Panc1 (cell line): ENCODE measurements at regions of chr16 and their contacts with region 1.

Region 1: DNA sequence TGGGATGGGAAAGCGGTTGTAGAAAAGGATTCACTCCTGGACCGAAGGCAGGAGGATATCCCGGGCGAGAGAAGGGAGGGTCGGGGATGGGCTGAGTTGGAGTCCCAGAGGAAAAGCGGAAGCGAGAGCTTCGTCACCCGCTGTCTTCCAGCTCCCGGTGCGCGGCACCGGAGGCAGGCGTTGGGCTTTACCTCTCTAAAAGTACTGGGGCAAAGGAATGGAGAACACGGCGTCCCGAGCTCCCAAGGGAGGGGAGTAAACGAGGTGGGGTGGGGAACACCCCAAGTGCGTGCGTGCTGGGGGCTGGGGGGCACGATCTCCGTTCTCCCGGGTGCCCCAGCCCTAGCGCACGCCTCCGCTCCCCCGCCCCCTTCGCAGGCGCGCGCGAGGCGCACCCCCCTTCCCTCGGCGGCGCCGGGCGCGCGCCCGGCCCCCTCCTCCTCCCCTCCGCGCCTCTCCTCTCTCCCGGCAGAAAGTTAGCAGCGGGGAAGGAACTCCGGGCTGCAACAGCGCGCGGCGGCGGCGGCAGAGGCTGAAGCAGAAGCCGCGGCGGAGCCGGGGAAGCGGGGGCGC is at the start of gene HS3ST4:
- DNase-seq: no peak
- ATAC-seq: no peak
- H3K4me3 ChIP-seq: no peak within 1 kb of the TSS
- H3K27ac ChIP-seq: no peak within 1 kb of the TSS
- H3K4me1 ChIP-seq: 0 out of 2 replicates have a peak, but pooled peaks cover 2% of the 10 kb centered on the region
- H3K27me3 ChIP-seq: peaks cover 32% of the 10 kb centered on the region
- CTCF ChIP-seq: no peak
- total RNA-seq, gene HS3ST4: not detected

Region 2: DNA sequence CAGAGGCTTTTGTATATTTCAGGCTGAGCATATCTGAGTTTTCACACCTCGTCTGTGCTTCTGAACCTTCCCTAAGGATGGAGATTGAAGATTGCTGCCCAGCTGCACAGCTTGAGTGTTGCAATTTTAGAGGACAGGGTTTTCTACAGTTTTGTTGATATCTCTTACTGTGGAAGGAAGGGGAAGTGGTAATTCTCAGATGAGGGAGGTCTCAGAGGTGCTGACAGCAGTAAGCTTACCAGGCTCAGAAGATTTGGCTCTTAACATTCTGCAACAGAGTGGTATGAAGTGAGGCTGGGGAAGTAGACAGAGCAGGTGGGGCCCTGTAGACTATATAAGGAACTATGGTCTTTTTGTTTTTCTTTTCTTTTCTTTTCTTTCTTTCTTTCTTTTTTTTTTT is 630.7 kb before region 1 on chr16:
- CTCF ChIA-PET with region 1: interaction called, 10 read pairs
- POLR2A ChIA-PET with region 1: no interaction called
- in situ Hi-C with region 1: no loop called
- intact Hi-C with region 1: no loop called
- DNase-seq: no peak
- ATAC-seq: no peak
- H3K4me3 ChIP-seq: no peak overlapping the region
- H3K27ac ChIP-seq: no peak overlapping the region
- H3K4me1 ChIP-seq: no peaks in the 10 kb centered on the region
- H3K27me3 ChIP-seq: no peaks in the 10 kb centered on the region
- CTCF ChIP-seq: no peak

Region 3: DNA sequence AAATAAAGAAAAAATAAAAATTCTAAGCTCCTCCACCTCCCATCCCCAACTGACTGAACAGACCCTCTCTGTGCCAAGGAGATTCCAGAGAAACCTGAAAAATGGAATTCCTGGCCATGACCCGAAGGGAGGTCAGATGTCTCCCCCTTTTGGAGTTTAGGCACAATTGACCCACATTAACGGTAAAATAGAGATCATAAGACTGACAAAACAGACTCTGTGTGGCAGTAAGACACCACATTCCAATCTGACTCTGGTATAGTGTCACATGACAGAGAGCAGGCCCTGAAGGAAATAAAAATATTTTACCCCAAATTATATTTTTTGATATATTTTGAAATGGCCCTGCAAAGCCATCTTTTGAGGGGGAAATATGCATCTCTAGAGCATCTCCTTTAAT is 318.9 kb before region 1 on chr16:
- CTCF ChIA-PET with region 1: no interaction called
- POLR2A ChIA-PET with region 1: interaction called, 13 read pairs
- in situ Hi-C with region 1: no loop called
- intact Hi-C with region 1: no loop called
- DNase-seq: no peak
- ATAC-seq: no peak
- H3K4me3 ChIP-seq: no peak overlapping the region
- H3K27ac ChIP-seq: no peak overlapping the region
- H3K4me1 ChIP-seq: no peaks in the 10 kb centered on the region
- H3K27me3 ChIP-seq: no peaks in the 10 kb centered on the region
- CTCF ChIP-seq: peak; percentile 18; the same call in 1 of the 2 replicates

Region 4: DNA sequence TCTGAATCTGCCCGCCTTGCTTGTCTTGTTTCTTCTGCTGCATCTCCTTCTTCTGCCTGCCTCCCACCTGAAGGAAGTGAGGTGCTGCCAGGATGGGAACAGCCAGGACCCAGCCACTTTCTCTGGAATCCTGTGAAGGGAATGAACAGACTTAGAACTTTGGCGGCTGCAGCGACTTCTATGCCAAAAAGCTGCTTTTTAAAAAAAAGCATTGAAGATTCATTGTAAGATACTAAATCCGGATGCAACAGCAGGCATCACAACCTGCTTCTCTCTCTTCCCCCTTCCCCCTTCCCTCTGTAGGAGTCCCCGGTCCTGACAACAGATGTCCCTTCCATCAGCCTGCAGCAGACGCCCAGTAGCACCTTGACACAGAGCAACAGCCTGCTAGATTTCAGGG is 176.5 kb after region 1 on chr16:
- CTCF ChIA-PET with region 1: no interaction called
- POLR2A ChIA-PET with region 1: no interaction called
- in situ Hi-C with region 1: no loop called
- intact Hi-C with region 1: no loop called
- DNase-seq: no peak
- ATAC-seq: no peak
- H3K4me3 ChIP-seq: no peak overlapping the region
- H3K27ac ChIP-seq: no peak overlapping the region
- H3K4me1 ChIP-seq: no peaks in the 10 kb centered on the region
- H3K27me3 ChIP-seq: no peaks in the 10 kb centered on the region
- CTCF ChIP-seq: no peak